ENCODE measurements at regions of chr2 and their contacts with region 1.

Region 1: GRCh38 chr2:119823734-119824334 is 64.1 kb downstream of the PTPN4 start:
- DNase-seq: no peak
- H3K4me3 ChIP-seq: no peak overlapping the region
- H3K27ac ChIP-seq: no peak overlapping the region
- H3K4me1 ChIP-seq: no peaks in the 10 kb centered on the region
- H3K27me3 ChIP-seq: no peaks in the 10 kb centered on the region
- CTCF ChIP-seq: peak; percentile 28 to 66 (median 38)

Region 2: DNA sequence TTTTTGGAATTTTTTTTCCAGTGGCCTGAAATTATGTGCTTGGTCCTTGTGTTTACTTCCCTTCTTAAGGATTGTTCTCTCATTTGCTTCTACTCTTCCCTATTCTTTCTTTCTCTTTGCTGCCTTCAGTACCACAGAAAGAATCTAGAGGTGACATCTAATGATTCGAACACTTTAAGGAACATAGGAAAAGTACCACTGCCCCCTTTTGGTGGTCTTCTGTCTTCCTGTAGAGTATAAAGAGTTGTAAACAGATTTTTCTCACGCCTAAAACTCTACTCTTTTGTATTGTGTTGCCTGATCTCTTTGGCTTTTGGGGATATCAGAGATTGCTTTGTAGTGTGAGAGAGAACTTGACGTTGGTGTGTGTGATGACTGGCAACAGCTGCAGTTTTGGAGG is 292.5 kb before region 1 on chr2:
- intact Hi-C with region 1: no loop called
- DNase-seq: no peak
- H3K4me3 ChIP-seq: no peak overlapping the region
- H3K27ac ChIP-seq: no peak overlapping the region
- H3K4me1 ChIP-seq: no peaks in the 10 kb centered on the region
- H3K27me3 ChIP-seq: no peaks in the 10 kb centered on the region
- CTCF ChIP-seq: no peak

Region 3: GRCh38 chr2:119753041-119753929 is 70.5 kb before region 1 on chr2:
- intact Hi-C with region 1: loop called (anchors 5 kb)
- DNase-seq: no peak
- H3K4me3 ChIP-seq: no peak overlapping the region
- H3K27ac ChIP-seq: no peak overlapping the region
- H3K4me1 ChIP-seq: peaks cover 0 to 2% of the 10 kb centered on the region in 2 donors
- H3K27me3 ChIP-seq: no peaks in the 10 kb centered on the region
- CTCF ChIP-seq: peak; percentile 37 to 71 (median 38)

Region 4: GRCh38 chr2:120044336-120044735 is 220.5 kb after region 1 on chr2:
- intact Hi-C with region 1: no loop called
- DNase-seq: no peak
- H3K4me3 ChIP-seq: no peak overlapping the region
- H3K27ac ChIP-seq: no peak overlapping the region
- H3K4me1 ChIP-seq: peaks cover 0 to 4% of the 10 kb centered on the region in 2 donors
- H3K27me3 ChIP-seq: no peaks in the 10 kb centered on the region
- CTCF ChIP-seq: no peak

Region 5: DNA sequence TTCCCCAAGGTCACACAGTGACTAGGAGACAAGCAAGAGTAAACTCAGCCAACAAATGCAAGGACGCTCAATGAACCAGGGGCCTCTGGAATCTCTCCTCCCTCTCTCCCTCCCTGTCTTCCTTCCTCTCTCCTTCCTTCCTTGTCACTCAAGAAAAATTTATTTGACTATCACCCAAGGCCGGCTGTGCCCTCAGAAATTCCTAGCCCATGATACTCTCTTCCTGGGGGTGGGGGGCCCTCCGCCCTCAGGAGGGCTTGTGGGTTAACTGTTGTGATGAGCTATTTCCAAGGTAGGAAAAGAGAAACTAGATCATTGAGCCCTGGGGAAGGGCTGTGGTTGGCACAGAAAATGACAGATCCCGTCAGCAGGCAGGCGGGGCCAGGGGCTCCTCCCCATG is 543.8 kb after region 1 on chr2:
- intact Hi-C with region 1: no loop called
- DNase-seq: no peak
- H3K4me3 ChIP-seq: no peak overlapping the region
- H3K27ac ChIP-seq: no peak overlapping the region
- H3K4me1 ChIP-seq: no peaks in the 10 kb centered on the region
- H3K27me3 ChIP-seq: no peaks in the 10 kb centered on the region
- CTCF ChIP-seq: no peak